ENCODE measurements at regions of chr1 and their contacts with region 1.

Region 1: DNA sequence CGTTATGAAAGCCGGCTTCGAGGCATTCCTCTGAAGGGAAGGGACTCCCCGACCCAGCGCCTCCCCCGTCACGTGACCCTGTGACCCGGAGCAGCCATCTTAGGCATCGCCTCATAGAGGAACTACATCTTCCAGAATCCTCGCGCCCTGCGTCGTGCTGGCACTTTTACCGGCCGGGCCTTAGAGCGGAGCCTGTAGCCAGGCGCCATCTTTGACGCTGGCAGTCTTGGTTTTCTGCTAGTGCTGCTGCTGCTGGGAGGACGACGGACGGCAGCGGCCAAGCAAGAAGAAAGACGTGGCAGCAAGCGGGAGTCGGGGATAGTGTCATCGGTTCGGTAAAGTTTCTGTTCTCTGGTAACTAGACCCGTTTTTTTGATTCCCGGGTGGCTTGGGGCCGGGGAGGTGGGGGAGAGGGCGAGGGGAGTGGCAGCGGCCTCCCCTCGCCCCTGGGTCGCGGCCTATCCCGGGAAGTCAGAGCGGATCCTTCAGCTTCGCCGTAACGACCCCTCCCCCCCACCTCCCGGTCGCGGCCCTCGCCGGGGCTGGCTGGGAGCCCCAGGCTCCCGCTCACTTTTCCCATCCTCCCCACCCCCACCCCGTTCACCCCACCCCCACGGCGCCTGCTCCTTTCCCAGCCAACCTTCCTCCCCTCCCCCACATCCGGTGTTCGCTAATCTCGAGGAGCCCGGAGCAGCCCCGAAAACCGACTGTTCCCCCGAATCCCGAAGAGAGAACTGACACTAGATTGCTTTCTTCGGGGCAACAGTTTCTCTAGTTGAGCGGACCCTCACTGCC is at the starts of genes ZBED6 and ZC3H11A:
- DNase-seq: peak; percentile 92
- H3K4me3 ChIP-seq: peak within 1 kb of the TSS; percentile 69 to 79 (median 76)
- H3K27ac ChIP-seq: peak within 1 kb of the TSS; percentile 98
- H3K4me1 ChIP-seq: peaks cover 40% of the 10 kb centered on the region
- H3K27me3 ChIP-seq: no peaks in the 10 kb centered on the region
- CTCF ChIP-seq: no peak
- polyA plus RNA-seq, gene ZBED6: 8.9 to 11.6 TPM (median 9.6 TPM) in 3 replicates
- polyA plus RNA-seq, gene ZC3H11A: 60.0 to 83.4 TPM (median 78.1 TPM) in 3 replicates

Region 2: GRCh38 chr1:203726417-203726867 is 69.2 kb before region 1 on chr1:
- dilution Hi-C with region 1: loop called (anchors 10 kb)
- DNase-seq: no peak
- H3K4me3 ChIP-seq: no peak overlapping the region
- H3K27ac ChIP-seq: no peak overlapping the region
- H3K4me1 ChIP-seq: no peaks in the 10 kb centered on the region
- H3K27me3 ChIP-seq: no peaks in the 10 kb centered on the region
- CTCF ChIP-seq: no peak

Region 3: GRCh38 chr1:203754455-203754864 is 41.2 kb before region 1 on chr1:
- dilution Hi-C with region 1: no loop called
- DNase-seq: no peak
- H3K4me3 ChIP-seq: peak overlapping the region in 1 of 3 experiments; percentile 3
- H3K27ac ChIP-seq: peak overlapping the region; percentile 82
- H3K4me1 ChIP-seq: peaks cover 50% of the 10 kb centered on the region
- H3K27me3 ChIP-seq: no peaks in the 10 kb centered on the region
- CTCF ChIP-seq: no peak

Measured in keratinocyte (primary cell).